Testis (tissue), 5 donors: ENCODE measurements at regions of chr10 and their contacts with region 1.

Region 1: GRCh38 chr10:25575343-25575742 is 358.7 kb upstream of the MYO3A start:
- DNase-seq: no peak
- H3K4me3 ChIP-seq: no peak overlapping the region
- H3K27ac ChIP-seq: no peak overlapping the region
- H3K4me1 ChIP-seq: no peaks in the 10 kb centered on the region
- H3K27me3 ChIP-seq: no peaks in the 10 kb centered on the region
- CTCF ChIP-seq: no peak
- POLR2A ChIP-seq: no peak

Region 2: GRCh38 chr10:25627606-25628005 is 52.3 kb after region 1 on chr10:
- intact Hi-C with region 1: loop called (anchors 5 kb)
- DNase-seq: no peak
- H3K4me3 ChIP-seq: no peak overlapping the region
- H3K27ac ChIP-seq: no peak overlapping the region
- H3K4me1 ChIP-seq: no peaks in the 10 kb centered on the region
- H3K27me3 ChIP-seq: no peaks in the 10 kb centered on the region
- CTCF ChIP-seq: no peak
- POLR2A ChIP-seq: no peak

Region 3: DNA sequence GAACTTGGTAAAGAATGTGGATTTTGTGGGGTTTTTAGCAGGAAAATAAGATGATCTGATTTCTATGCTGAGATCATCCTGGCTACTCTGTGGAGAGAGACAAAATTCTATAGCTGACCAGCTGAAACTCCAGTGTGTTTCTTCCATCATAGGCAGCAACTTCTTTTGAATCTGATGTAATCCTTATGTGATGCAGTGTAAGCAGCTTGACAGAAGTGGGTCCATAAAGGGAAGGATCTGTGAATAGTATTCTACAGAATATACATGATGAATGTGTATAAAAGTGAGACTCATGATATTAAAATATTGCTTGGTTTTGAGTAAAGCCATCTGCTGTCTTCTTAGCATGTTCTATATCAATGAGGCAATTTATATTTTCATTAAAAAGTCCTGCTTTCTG is 363.1 kb after region 1 on chr10:
- intact Hi-C with region 1: no loop called
- DNase-seq: no peak
- H3K4me3 ChIP-seq: no peak overlapping the region
- H3K27ac ChIP-seq: no peak overlapping the region
- H3K4me1 ChIP-seq: no peaks in the 10 kb centered on the region
- H3K27me3 ChIP-seq: no peaks in the 10 kb centered on the region
- CTCF ChIP-seq: no peak
- POLR2A ChIP-seq: no peak